Right ventricle myocardium inferior (tissue), 1 donor: ENCODE measurements at regions of chr20 and their contacts with region 1.

Region 1: GRCh38 chr20:24469894-24470745 is 691 bp downstream of the SYNDIG1 start:
- DNase-seq: no peak
- ATAC-seq: peak; percentile 26

Region 2: DNA sequence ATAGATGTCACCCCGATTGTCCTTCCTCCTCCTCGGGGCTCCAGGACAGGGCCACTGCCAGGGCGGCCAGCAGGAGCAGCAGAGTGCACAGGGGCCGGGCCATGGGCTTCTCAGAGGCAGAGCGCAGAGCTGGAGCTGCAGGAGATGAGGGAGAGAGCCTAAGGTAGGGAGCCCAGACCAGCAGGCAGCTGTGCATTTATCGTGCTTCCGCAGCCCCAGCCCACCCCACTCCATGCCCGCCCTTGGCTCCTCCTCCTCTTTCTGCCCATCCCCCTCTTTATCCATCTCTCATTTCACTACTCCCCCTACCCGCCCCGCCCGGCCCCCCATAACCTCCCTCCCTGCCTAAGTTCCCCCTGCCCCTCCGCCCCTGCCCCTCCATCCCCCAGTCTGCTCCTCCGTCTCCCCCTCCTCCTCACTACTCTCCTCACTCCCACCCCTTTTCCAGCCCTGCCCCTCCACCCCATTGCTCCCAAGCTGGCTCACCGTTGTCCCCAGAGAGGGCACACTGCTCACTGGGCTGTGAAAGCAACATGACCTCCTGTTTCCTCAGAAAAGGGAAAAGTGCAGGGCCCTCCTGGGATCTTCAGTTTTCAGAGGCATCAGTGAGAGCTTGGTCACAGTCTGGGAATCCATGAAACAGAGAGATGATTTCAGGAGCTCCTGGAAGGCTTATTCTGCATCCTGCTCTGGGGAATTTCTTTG is 693.9 kb before region 1 on chr20:
- intact Hi-C with region 1: no loop called
- DNase-seq: no peak
- ATAC-seq: no peak

Region 3: DNA sequence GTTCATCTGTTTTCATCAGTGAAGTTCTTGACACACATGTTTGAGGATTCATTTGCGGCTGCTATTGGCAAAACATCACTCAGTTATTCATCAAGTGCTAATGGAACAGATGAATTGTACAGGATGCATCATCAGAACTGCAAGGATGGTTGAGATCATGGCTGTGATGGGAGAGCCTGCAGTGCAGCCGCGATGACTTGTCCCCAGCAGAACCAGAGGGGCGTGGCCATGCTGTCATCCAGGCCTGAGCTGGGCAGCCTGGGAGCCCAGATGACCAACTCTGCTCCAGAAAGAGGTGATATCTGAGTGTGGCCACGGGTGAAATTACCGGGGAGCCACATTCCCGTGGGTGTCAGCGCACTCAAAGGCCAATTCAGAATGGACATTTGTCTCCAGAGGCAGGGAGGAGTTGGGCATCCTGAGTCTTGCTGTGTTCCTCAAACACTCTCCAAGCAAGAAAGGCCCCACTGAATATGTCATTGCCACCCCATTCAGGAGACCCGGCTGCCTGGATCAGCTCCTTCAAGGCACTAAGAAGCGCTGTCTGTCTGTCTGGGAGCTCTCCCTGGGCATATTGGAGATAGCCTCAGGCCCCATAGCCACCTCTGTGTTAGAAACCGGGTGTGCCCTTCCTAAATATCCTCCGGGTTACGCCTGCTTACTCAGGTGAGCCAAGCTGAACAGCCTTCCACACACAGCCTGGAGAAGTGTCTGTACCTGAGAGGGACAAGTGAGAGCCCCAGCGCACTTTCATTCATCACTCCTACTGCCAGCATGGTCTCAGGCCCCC is 66.0 kb after region 1 on chr20:
- intact Hi-C with region 1: loop called (anchors 10 kb)
- DNase-seq: no peak
- ATAC-seq: no peak

Region 4: GRCh38 chr20:24634855-24635254 is 164.7 kb after region 1 on chr20:
- intact Hi-C with region 1: loop called (anchors 5 kb)
- DNase-seq: no peak
- ATAC-seq: peak; percentile 61